Activated CD4-positive, alpha-beta memory T cell treated with anti-CD3 and anti-CD28 coated beads for 36 hours (primary cell): ENCODE measurements at regions of chr17 and their contacts with region 1.

Region 1: GRCh38 chr17:72118335-72119076 is 2.3 kb upstream of the SOX9 start:
- DNase-seq: peak; percentile 46
- H3K4me3 Mint-ChIP-seq: peak overlapping the region; percentile 12
- H3K27ac Mint-ChIP-seq: no peak overlapping the region
- H3K4me1 Mint-ChIP-seq: peaks cover 6% of the 10 kb centered on the region
- H3K27me3 Mint-ChIP-seq: peaks cover 75% of the 10 kb centered on the region

Region 2: DNA sequence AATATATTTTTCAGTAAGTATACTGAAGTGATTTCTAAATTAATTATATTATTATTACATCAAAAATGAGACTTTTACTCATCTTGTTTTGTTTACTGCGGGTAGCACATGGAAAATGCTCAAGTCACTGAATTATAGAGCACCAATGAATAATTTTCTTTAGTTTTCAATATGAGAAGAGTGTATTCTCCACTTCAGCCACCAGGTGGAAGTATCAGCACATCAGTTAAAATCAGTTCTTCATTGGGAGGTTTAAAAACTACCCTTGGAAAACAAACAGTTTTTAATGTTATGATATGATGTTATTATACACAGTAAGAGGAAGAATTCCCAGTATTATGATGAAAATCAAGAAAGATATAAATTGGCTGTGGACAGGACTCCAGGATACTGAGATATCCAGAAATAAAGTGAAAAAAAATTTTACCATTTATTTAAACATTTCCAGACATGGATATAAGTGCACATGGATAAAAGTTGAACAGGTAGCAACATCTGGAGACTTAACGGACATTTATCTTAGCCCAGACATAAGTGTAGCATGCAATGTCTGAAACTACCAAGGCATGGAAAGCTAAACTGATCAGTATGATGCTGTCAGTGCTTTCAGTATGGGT is 1481.9 kb before region 1 on chr17:
- CTCF ChIA-PET with region 1: no interaction called
- POLR2A ChIA-PET with region 1: no interaction called
- intact Hi-C with region 1: loop called (anchors 5 kb)
- DNase-seq: no peak
- H3K4me3 Mint-ChIP-seq: no peak overlapping the region
- H3K27ac Mint-ChIP-seq: no peak overlapping the region
- H3K4me1 Mint-ChIP-seq: no peaks in the 10 kb centered on the region
- H3K27me3 Mint-ChIP-seq: no peaks in the 10 kb centered on the region

Region 3: DNA sequence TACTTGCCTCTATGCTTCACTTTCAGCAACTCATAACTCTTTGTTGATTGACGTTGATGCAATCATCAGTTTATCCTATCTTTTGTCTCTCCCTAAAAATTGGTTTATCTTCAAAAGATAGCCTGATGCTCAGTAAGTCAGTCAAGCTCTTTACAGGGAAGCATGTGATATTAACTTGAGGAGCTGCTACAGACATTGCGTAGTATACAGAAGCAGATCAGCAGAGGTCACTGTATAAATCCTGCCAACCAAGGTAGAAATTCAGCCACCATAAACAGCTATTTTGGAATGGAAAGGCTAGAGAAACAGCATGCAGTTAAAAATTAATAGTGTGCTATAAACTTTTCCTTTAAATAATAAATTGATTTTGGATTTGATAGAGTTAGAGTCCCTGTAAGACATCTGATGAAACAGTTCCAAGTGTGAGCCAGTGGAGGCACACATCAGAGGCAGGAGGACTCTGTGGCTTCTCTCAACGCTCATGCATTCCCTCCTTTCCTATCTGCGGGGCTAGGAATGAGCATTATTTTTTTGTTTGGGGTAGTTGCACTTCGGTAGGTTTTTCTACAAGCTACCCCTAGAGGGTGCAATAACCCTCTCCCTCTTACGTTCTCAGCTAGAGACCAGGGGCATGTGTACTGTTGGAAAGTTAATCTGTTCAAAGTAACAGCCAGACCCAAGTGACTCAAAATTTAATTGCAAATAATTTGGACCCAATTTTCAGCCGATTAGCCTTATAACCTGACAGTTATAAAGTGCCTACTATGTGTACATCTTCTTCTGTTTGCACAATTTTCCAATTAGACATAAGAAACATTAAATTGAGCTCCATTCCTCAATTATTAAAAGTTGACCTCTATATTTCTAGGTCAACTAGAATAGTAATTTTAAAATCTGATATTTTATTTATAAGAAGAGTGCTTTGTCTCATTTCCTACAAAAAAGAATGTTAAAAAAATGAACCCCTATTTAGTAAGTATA is 645.4 kb before region 1 on chr17:
- CTCF ChIA-PET with region 1: no interaction called
- POLR2A ChIA-PET with region 1: no interaction called
- intact Hi-C with region 1: loop called (anchors 10 kb)
- DNase-seq: no peak
- H3K4me3 Mint-ChIP-seq: no peak overlapping the region
- H3K27ac Mint-ChIP-seq: no peak overlapping the region
- H3K4me1 Mint-ChIP-seq: no peaks in the 10 kb centered on the region
- H3K27me3 Mint-ChIP-seq: no peaks in the 10 kb centered on the region

Region 4: GRCh38 chr17:72539981-72540897 is 421.7 kb after region 1 on chr17:
- CTCF ChIA-PET with region 1: no interaction called
- POLR2A ChIA-PET with region 1: no interaction called
- intact Hi-C with region 1: loop called (anchors 5 kb)
- DNase-seq: peak; percentile 73
- H3K4me3 Mint-ChIP-seq: no peak overlapping the region
- H3K27ac Mint-ChIP-seq: no peak overlapping the region
- H3K4me1 Mint-ChIP-seq: peaks cover 2% of the 10 kb centered on the region
- H3K27me3 Mint-ChIP-seq: peaks cover 21% of the 10 kb centered on the region